Naive thymus-derived CD4-positive, alpha-beta T cell (primary cell): ENCODE measurements at regions of chr19 and their contacts with region 1.

Region 1: GRCh38 chr19:43668406-43669158 is 1.4 kb downstream of the PLAUR start:
- DNase-seq: peak; percentile 82 to 98 (median 95)
- ATAC-seq: peak; percentile 90
- H3K4me3 ChIP-seq: peak overlapping the region; percentile 88
- H3K4me3 Mint-ChIP-seq: peak overlapping the region; percentile 84 to 93 (median 90)
- H3K27ac ChIP-seq: peak overlapping the region; percentile 58
- H3K27ac Mint-ChIP-seq: peak overlapping the region; percentile 71 to 91 (median 86)
- H3K4me1 ChIP-seq: peaks cover 16 to 27% of the 10 kb centered on the region in 2 donors
- H3K4me1 Mint-ChIP-seq: peaks cover 37 to 55% (median 45%) of the 10 kb centered on the region in 7 donors
- H3K27me3 ChIP-seq: no peaks in the 10 kb centered on the region
- H3K27me3 Mint-ChIP-seq: peaks cover 0 to 8% (median 0%) of the 10 kb centered on the region in 5 donors

Region 2: GRCh38 chr19:43152217-43152616 is 516.4 kb before region 1 on chr19:
- CTCF ChIA-PET with region 1: no interaction called
- POLR2A ChIA-PET with region 1: no interaction called
- intact Hi-C with region 1: no loop called
- DNase-seq: no peak
- ATAC-seq: no peak
- H3K4me3 ChIP-seq: no peak overlapping the region
- H3K4me3 Mint-ChIP-seq: no peak overlapping the region
- H3K27ac ChIP-seq: no peak overlapping the region
- H3K27ac Mint-ChIP-seq: no peak overlapping the region
- H3K4me1 ChIP-seq: no peaks in the 10 kb centered on the region
- H3K4me1 Mint-ChIP-seq: no peaks in the 10 kb centered on the region
- H3K27me3 ChIP-seq: no peaks in the 10 kb centered on the region
- H3K27me3 Mint-ChIP-seq: peaks cover 0 to 20% (median 11%) of the 10 kb centered on the region in 5 donors

Region 3: GRCh38 chr19:43503501-43504425 is 164.8 kb before region 1 on chr19:
- CTCF ChIA-PET with region 1: no interaction called
- POLR2A ChIA-PET with region 1: no interaction called
- intact Hi-C with region 1: loop called (anchors 1 kb)
- DNase-seq: peak; percentile 93 to 99 (median 98)
- ATAC-seq: peak; percentile 99
- H3K4me3 ChIP-seq: peak overlapping the region; percentile 98
- H3K4me3 Mint-ChIP-seq: peak overlapping the region; percentile 90 to 98 (median 92)
- H3K27ac ChIP-seq: peak overlapping the region; percentile 96
- H3K27ac Mint-ChIP-seq: peak overlapping the region; percentile 90 to 100 (median 96)
- H3K4me1 ChIP-seq: peaks cover 5 to 18% of the 10 kb centered on the region in 2 donors
- H3K4me1 Mint-ChIP-seq: peaks cover 25 to 59% (median 39%) of the 10 kb centered on the region in 7 donors
- H3K27me3 ChIP-seq: no peaks in the 10 kb centered on the region
- H3K27me3 Mint-ChIP-seq: no peaks in the 10 kb centered on the region

Region 4: DNA sequence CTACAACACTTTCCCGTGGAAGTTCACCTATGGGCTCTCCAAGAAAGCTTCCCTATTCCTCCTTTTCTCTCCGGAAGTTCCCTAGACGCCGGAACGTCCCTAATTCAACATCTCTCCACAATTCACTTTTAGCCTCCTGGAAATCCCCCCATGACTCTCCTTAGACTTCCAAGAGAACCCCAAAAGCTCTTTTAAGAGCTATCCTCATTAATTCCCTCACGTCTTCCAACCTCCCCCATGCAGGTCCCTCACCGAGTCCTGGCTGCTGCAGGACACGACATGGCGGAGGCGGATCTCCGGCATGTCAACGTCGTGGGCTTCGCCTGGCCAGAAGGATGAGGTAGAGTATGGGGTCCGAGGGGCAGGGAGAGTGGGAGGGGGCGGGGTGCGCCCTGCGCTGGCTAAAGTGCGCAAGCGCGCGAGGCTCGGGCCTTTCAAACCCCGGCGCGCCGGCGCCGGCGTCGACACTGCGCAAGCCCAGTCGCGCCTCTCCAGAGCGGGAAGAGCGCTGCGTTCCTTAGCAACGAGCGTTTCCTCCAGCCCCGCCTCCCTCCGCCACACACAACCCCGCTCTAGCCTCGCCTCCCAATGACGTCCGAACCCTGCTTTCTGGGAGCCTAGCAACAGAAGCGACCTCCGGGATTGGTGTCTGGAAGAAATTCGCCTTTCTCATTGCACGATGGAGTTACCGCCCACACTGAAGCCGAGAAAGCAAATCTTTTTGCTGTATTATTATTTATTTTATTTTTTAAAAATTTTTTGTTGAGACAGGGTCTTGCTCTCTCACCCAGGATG is 93.2 kb before region 1 on chr19 and contains the starts of genes PINLYP and XRCC1:
- CTCF ChIA-PET with region 1: interaction called, 5 read pairs
- POLR2A ChIA-PET with region 1: no interaction called
- intact Hi-C with region 1: loop called in 1 of 2 experiments (anchors 1 kb)
- DNase-seq: peak; percentile 85 to 99 (median 95)
- ATAC-seq: peak; percentile 99
- H3K4me3 ChIP-seq: peak within 1 kb of the TSS; percentile 77
- H3K4me3 Mint-ChIP-seq: peak within 1 kb of the TSS; percentile 92 to 98 (median 96)
- H3K27ac ChIP-seq: peak within 1 kb of the TSS; percentile 98
- H3K27ac Mint-ChIP-seq: peak within 1 kb of the TSS; percentile 93 to 99 (median 96)
- H3K4me1 ChIP-seq: peaks cover 12 to 14% of the 10 kb centered on the region in 2 donors
- H3K4me1 Mint-ChIP-seq: peaks cover 26 to 63% (median 51%) of the 10 kb centered on the region in 7 donors
- H3K27me3 ChIP-seq: no peaks in the 10 kb centered on the region
- H3K27me3 Mint-ChIP-seq: peaks cover 0 to 5% (median 0%) of the 10 kb centered on the region in 5 donors
- total RNA-seq, gene PINLYP: 0.27 to 5.8 (median 0.59) TPM
- total RNA-seq, gene XRCC1: 32.0 to 36.1 (median 35.4) TPM

Region 5: DNA sequence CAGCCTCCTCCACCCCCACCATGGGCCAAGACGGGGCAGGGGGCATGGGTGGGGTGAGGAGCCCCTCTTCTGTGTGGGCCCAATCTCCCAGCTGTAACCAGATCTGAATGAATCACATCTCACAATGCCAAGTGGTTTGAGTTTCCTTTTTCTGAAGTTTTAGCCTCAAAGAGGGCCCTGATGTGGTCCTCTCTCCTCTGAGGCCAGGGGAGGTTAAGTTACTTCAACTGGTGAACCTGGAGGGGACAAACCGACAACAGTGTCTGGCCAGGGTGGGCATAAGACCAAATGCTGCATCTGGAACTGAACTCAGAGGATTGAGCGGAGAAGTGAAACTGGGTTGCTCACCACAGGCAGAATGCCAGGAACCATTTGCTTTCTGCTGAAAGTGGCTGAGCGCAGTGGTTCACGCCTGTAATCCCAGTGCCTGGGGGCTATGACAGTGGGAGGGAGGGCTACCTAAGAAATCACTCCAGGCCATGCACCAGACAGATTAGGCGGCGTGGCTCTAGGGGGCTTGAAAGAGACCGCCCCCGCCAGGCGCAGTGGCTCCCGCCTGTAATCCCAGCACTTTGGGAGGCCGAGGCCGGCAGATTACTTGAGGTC is 31.9 kb after region 1 on chr19:
- CTCF ChIA-PET with region 1: no interaction called
- POLR2A ChIA-PET with region 1: interaction called, 3 read pairs
- intact Hi-C with region 1: loop called (anchors 1 kb)
- DNase-seq: peak in 4 of 9 donors; percentile 1 to 10 (median 4)
- ATAC-seq: peak; percentile 15
- H3K4me3 ChIP-seq: no peak overlapping the region
- H3K4me3 Mint-ChIP-seq: peak overlapping the region; percentile 66 to 92 (median 81)
- H3K27ac ChIP-seq: peak overlapping the region; percentile 34
- H3K27ac Mint-ChIP-seq: peak overlapping the region; percentile 47 to 100 (median 91)
- H3K4me1 ChIP-seq: peaks cover 3 to 13% of the 10 kb centered on the region in 2 donors
- H3K4me1 Mint-ChIP-seq: peaks cover 12 to 28% (median 22%) of the 10 kb centered on the region in 7 donors
- H3K27me3 ChIP-seq: peaks cover 0 to 3% of the 10 kb centered on the region in 2 donors
- H3K27me3 Mint-ChIP-seq: peaks cover 0 to 17% (median 13%) of the 10 kb centered on the region in 5 donors

Region 6: DNA sequence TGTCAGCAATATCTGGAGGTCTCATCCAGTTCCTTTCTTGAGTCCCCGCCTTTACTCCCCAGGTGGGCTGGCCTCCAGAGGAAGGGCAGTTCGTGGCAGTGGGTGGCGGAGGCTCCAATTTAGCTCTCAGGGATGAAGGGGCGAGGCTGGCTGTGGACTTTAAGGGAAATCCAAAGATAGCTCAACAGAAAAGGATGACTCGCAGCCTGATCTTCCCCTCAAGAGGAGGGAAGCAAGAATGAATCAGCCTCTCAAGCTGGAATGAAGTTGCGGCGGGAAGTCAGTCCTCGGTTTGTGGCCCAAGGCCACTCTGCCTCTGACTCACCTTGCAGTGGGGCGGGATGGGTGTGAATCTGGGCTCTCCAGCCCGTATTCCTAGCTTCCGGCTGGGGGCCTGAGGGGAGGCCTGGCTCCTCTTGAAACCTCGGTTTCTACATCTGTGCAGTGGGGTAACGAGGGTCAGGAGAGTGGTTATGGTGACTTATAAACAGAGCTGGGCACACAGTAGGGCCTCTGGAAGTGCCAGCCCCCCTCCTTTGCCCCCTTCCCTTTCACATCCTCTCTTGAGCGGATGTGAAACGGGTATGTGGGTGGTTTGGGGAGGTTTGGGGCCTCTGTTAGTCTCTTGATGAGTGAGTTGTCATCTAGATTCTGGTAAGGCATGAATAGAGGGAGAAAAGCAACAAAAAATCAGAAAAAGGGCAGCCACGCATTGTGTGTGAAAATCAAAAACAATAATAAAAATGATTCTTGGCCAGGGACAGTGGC is 96.7 kb after region 1 on chr19:
- CTCF ChIA-PET with region 1: interaction called, 4 read pairs
- POLR2A ChIA-PET with region 1: no interaction called
- intact Hi-C with region 1: loop called in 1 of 2 experiments (anchors 1 kb)
- DNase-seq: peak in 8 of 9 donors; percentile 20 to 86 (median 38)
- ATAC-seq: peak; percentile 81
- H3K4me3 ChIP-seq: no peak overlapping the region
- H3K4me3 Mint-ChIP-seq: peak overlapping the region; percentile 35 to 80 (median 67)
- H3K27ac ChIP-seq: peak overlapping the region; percentile 45
- H3K27ac Mint-ChIP-seq: peak overlapping the region; percentile 78 to 94 (median 88)
- H3K4me1 ChIP-seq: peaks cover 23 to 32% of the 10 kb centered on the region in 2 donors
- H3K4me1 Mint-ChIP-seq: peaks cover 32 to 73% (median 40%) of the 10 kb centered on the region in 7 donors
- H3K27me3 ChIP-seq: no peaks in the 10 kb centered on the region
- H3K27me3 Mint-ChIP-seq: no peaks in the 10 kb centered on the region